T-cell (primary cell): ENCODE measurements at regions of chr4 and their contacts with region 1.

Region 1: DNA sequence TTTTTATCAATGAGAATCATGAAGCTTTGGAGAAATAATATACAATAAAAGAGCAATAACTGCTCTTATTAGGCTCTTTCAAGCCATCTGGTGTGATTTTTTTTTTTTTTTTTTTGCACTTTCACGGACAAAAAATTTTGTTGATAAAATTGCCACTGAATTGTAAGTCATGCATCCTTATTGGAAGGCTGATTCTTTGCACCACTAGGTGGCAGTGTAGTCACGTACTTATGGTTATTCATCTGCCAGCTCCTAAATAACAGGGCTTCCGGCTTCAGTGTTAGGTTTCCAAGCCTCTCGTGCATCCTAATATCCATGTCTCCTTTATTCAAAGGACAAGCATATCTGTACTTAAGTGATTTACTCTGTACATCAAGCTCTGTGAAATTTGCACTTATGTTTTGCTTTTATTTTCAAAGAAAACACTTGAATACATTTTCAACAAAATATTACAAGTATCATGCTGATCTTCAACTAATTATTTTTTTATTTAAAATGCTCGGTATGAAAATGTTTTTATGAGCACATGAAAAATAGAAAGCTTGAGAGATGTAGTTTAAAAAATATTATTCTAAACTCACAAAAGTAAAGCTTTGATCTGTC is 1578.3 kb upstream of the TENM3 start:
- DNase-seq: peak in 24 of 35 experiments; percentile 4 to 65 (median 21)
- ATAC-seq: no peak
- H3K4me3 ChIP-seq: no peak overlapping the region
- H3K4me3 Mint-ChIP-seq: no peak overlapping the region
- H3K27ac ChIP-seq: no peak overlapping the region
- H3K27ac Mint-ChIP-seq: no peak overlapping the region
- H3K4me1 ChIP-seq: no peaks in the 10 kb centered on the region
- H3K4me1 Mint-ChIP-seq: no peaks in the 10 kb centered on the region
- H3K27me3 ChIP-seq: no peaks in the 10 kb centered on the region
- H3K27me3 Mint-ChIP-seq: no peaks in the 10 kb centered on the region

Region 2: GRCh38 chr4:180610324-180610723 is 54.5 kb before region 1 on chr4:
- CTCF ChIA-PET with region 1: interaction called in 1 of 2 experiments, 10 read pairs
- POLR2A ChIA-PET with region 1: no interaction called
- DNase-seq: no peak
- ATAC-seq: no peak
- H3K4me3 ChIP-seq: no peak overlapping the region
- H3K4me3 Mint-ChIP-seq: no peak overlapping the region
- H3K27ac ChIP-seq: no peak overlapping the region
- H3K27ac Mint-ChIP-seq: no peak overlapping the region
- H3K4me1 ChIP-seq: no peaks in the 10 kb centered on the region
- H3K4me1 Mint-ChIP-seq: no peaks in the 10 kb centered on the region
- H3K27me3 ChIP-seq: no peaks in the 10 kb centered on the region
- H3K27me3 Mint-ChIP-seq: no peaks in the 10 kb centered on the region

Region 3: DNA sequence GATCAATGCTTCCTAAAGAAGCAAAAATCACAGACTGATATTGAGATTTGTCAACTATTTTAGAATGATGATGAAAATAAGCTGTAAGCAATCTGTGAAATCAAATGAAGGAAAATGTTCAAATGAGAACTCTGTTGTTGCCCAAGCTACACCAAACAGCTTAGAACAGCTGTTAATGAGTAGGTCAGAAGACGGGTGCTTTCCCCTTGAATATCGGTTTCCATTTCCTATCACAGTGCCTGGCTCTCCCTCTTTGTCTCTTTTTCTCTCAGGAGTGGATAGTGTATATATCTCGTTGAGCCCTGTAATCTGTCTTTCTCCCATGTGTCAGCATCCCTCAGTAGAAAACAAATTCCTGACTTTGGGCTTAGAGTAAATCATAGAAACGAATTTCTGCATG is 14.6 kb before region 1 on chr4:
- CTCF ChIA-PET with region 1: interaction called, 14 to 16 read pairs
- POLR2A ChIA-PET with region 1: no interaction called
- DNase-seq: no peak
- ATAC-seq: no peak
- H3K4me3 ChIP-seq: no peak overlapping the region
- H3K4me3 Mint-ChIP-seq: no peak overlapping the region
- H3K27ac ChIP-seq: no peak overlapping the region
- H3K27ac Mint-ChIP-seq: no peak overlapping the region
- H3K4me1 ChIP-seq: no peaks in the 10 kb centered on the region
- H3K4me1 Mint-ChIP-seq: no peaks in the 10 kb centered on the region
- H3K27me3 ChIP-seq: no peaks in the 10 kb centered on the region
- H3K27me3 Mint-ChIP-seq: no peaks in the 10 kb centered on the region